Colonic mucosa (tissue), 4 donors: ENCODE measurements at regions of chr9 and their contacts with region 1.

Region 1: DNA sequence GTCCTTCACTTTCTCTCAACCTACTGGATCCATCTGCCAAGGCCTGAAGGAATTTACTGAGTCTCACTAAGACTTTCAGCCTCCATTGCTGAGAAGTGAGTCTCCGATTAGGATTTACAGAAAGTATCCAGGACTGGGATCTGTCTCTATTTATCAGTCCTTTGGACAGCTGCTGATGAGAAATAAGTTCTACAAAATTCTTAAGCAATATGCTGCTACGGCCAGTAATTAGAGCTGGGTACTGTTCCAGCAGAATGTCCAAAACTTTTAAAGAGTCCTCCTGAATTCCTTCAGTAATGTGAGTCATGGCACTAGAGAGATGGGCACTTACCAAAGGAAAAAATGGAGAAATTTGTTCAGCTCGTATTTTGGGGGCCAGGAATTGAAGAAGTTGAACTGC is 5.9 kb downstream of the TEX10 start:
- DNase-seq: no peak
- H3K4me3 ChIP-seq: no peak overlapping the region
- H3K27ac ChIP-seq: no peak overlapping the region
- H3K4me1 ChIP-seq: peaks cover 5% of the 10 kb centered on the region
- H3K27me3 ChIP-seq: no peaks in the 10 kb centered on the region
- CTCF ChIP-seq: no peak

Region 2: GRCh38 chr9:100408546-100409175 is 61.8 kb after region 1 on chr9:
- intact Hi-C with region 1: loop called (anchors 10 kb)
- DNase-seq: no peak
- H3K4me3 ChIP-seq: no peak overlapping the region
- H3K27ac ChIP-seq: no peak overlapping the region
- H3K4me1 ChIP-seq: no peaks in the 10 kb centered on the region
- H3K27me3 ChIP-seq: no peaks in the 10 kb centered on the region
- CTCF ChIP-seq: no peak

Region 3: GRCh38 chr9:100605405-100605804 is 258.6 kb after region 1 on chr9:
- intact Hi-C with region 1: no loop called
- DNase-seq: no peak
- H3K4me3 ChIP-seq: no peak overlapping the region
- H3K27ac ChIP-seq: no peak overlapping the region
- H3K4me1 ChIP-seq: no peaks in the 10 kb centered on the region
- H3K27me3 ChIP-seq: no peaks in the 10 kb centered on the region
- CTCF ChIP-seq: no peak